ENCODE measurements at regions of chr13 and their contacts with region 1.

Region 1: DNA sequence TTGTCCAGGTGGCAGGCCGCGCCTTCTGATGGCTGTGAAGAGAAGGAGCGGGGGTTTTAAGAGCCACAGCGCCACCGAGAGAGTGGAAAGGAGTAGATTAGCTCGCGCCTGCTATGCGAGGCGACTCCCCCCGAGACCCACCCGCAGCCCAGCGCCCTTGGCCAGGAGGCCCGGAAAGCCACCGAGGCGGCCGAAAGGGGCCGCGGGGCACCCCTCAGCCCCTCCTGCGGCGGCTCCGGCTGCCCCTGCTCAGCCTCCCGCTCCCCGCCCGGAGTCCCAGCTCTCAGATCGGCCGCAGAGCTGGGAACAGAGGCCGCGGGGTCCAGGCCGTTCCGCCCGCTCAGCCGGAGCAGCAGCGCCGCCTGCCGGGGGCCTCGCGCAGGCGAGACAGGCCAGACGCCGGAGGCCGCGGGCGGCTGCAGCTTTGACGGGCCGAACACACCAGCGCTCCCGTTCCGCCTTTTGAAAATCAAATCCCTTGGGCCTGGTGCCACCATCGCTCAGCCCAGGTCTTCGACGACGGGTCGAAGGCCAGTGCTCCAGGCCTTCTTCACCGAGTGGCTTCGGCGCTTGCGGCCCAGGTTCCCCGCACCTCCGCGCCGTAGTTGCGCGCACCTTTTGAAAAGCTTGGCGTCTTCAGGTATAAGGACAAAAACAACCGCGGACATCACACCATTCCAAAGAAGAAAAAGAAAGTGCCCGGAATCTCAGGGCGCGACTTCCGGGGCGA is 15.3 kb downstream of the CDX2 start:
- DNase-seq: peak; percentile 54
- ATAC-seq: peak; percentile 99
- H3K4me3 ChIP-seq: peak overlapping the region; percentile 41 to 58
- H3K27ac ChIP-seq: peak overlapping the region; percentile 56
- H3K4me1 ChIP-seq: peaks cover 9 to 15% of the 10 kb centered on the region in 2 experiments; a peak in 3 of 4 replicates
- H3K27me3 ChIP-seq: no peaks in the 10 kb centered on the region
- CTCF ChIP-seq: peak; percentile 75 to 95 (median 90)
- POLR2A ChIP-seq: no peak
- RAD21 ChIP-seq: peak; percentile 80

Region 2: DNA sequence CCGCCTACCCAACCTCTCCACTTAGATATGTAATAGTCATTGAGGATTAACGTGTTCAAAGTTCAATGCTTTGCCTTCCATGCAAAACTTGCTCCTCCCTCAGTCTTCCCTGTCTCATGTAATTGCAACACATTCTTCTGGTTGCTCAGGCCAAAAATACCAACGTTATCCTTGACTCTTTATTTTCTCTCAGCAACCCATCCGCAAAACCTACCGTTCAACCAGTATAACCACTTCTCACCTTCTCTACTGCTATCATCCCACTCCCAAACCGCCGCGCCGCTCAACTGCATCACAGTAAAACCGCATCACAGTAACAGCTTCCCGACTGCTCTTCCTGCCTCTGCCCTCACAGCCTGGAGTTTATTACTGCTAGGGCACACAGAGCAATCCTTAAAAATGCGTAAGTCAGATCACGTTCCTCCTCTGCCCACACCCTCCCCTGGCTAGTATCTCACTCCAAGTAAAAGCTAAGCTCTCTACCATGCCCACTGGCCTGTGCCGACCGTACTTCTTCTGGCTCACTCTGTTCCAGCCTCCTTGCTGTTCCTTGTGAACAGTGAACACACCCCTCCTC is 511.7 kb before region 1 on chr13:
- CTCF ChIA-PET with region 1: no interaction called
- POLR2A ChIA-PET with region 1: no interaction called
- RAD21 ChIA-PET with region 1: no interaction called
- intact Hi-C with region 1: no loop called
- DNase-seq: no peak
- ATAC-seq: no peak
- H3K4me3 ChIP-seq: no peak overlapping the region
- H3K27ac ChIP-seq: no peak overlapping the region
- H3K4me1 ChIP-seq: no peaks in the 10 kb centered on the region
- H3K27me3 ChIP-seq: no peaks in the 10 kb centered on the region
- CTCF ChIP-seq: no peak
- POLR2A ChIP-seq: no peak
- RAD21 ChIP-seq: no peak

Region 3: DNA sequence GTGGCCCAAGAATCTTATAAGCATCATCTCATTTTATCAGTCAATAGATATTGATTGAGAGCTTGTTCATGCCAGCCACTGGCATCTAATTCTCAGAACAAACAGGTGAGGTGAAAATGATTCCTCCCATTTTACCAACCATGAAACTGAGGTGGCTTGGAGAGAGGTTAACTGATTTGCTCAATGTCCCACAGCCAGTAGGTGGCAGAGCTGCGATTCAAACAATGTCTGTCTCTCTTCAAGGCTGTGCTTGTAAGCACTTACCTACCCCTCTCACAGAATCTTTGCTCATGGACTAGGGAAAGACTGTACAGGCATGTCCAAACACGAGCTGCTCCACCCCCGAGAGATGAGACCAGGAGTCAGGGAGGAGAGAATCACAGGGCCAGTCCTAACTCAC is 183.0 kb before region 1 on chr13:
- CTCF ChIA-PET with region 1: interaction called, 6 read pairs
- POLR2A ChIA-PET with region 1: no interaction called
- RAD21 ChIA-PET with region 1: no interaction called
- intact Hi-C with region 1: loop called (anchors 2 kb)
- DNase-seq: peak; percentile 31
- ATAC-seq: peak; percentile 97
- H3K4me3 ChIP-seq: no peak overlapping the region
- H3K27ac ChIP-seq: no peak overlapping the region
- H3K4me1 ChIP-seq: no peaks in the 10 kb centered on the region
- H3K27me3 ChIP-seq: no peaks in the 10 kb centered on the region
- CTCF ChIP-seq: peak; percentile 57 to 72 (median 68); a peak in 5 of 6 replicates
- POLR2A ChIP-seq: no peak
- RAD21 ChIP-seq: peak; percentile 57; the same call in 1 of the 2 replicates

Region 4: DNA sequence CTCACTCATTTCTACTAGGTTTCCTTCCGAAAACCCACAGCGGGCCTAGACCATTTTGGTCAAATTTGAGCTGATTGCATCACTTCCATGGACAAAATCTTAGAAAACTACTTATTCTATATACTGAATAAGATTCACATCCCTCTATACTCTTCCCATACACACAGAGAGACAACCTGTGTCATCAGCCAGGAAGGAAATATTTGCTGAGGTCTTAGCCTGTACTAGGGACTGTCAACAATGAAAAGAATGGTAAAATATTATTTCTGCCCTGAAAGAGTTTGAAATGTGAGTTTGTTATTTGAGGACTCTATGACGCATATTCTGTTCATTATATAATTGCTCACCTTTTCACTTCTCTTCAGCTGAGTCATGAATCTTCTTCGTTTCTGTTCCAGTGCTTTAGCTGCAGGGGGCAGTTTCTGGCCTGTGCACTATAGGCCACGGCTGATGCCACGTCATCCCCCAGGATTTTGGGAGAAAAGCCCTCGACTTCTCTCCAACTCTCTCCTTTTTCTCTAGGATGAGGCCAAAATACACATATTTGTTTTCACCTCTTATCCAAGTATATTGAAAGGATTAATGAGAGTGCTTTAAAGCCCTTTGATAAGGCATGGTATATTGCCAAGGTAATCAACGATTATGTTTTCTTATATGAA is 113.9 kb before region 1 on chr13:
- CTCF ChIA-PET with region 1: interaction called, 20 read pairs
- POLR2A ChIA-PET with region 1: no interaction called
- RAD21 ChIA-PET with region 1: interaction called, 3 to 4 read pairs
- intact Hi-C with region 1: no loop called
- DNase-seq: peak; percentile 36
- ATAC-seq: peak; percentile 95
- H3K4me3 ChIP-seq: no peak overlapping the region
- H3K27ac ChIP-seq: no peak overlapping the region
- H3K4me1 ChIP-seq: peaks cover 3 to 12% of the 10 kb centered on the region in 2 experiments; a peak in 3 of 4 replicates
- H3K27me3 ChIP-seq: no peaks in the 10 kb centered on the region
- CTCF ChIP-seq: peak; percentile 22 to 26 (median 25); a peak in 4 of 6 replicates
- POLR2A ChIP-seq: no peak
- RAD21 ChIP-seq: peak; percentile 36; the same call in 1 of the 2 replicates

Region 5: GRCh38 chr13:27968316-27969081 is 14.7 kb after region 1 on chr13:
- CTCF ChIA-PET with region 1: interaction called, 14 read pairs
- POLR2A ChIA-PET with region 1: interaction called, 5 read pairs
- RAD21 ChIA-PET with region 1: no interaction called
- intact Hi-C with region 1: no loop called
- DNase-seq: no peak
- ATAC-seq: peak; percentile 64
- H3K4me3 ChIP-seq: peak overlapping the region; percentile 81 to 84
- H3K27ac ChIP-seq: peak overlapping the region; percentile 83
- H3K4me1 ChIP-seq: peaks cover 6 to 20% of the 10 kb centered on the region in 2 experiments; a peak in 3 of 4 replicates
- H3K27me3 ChIP-seq: no peaks in the 10 kb centered on the region
- CTCF ChIP-seq: 0 out of 6 replicates have a peak, but pooled peaks of 1 of the 3 experiments have one; percentile 1
- POLR2A ChIP-seq: no peak
- RAD21 ChIP-seq: no peak